CD4-positive, alpha-beta memory T cell (primary cell): ENCODE measurements at regions of chrX and their contacts with region 1.

Region 1: GRCh38 chrX:107776649-107777535 is 641 bp upstream of the NCBP2L start:
- DNase-seq: peak; percentile 83 to 85 (median 84)
- H3K4me3 ChIP-seq: peak overlapping the region; percentile 47 to 48
- H3K4me3 Mint-ChIP-seq: peak overlapping the region; percentile 86 to 98 (median 92)
- H3K27ac ChIP-seq: peak overlapping the region; percentile 52
- H3K27ac Mint-ChIP-seq: peak overlapping the region; percentile 81 to 96 (median 93)
- H3K4me1 ChIP-seq: peaks cover 21% of the 10 kb centered on the region
- H3K4me1 Mint-ChIP-seq: peaks cover 5 to 27% (median 14%) of the 10 kb centered on the region in 4 donors
- H3K27me3 ChIP-seq: no peaks in the 10 kb centered on the region
- H3K27me3 Mint-ChIP-seq: no peaks in the 10 kb centered on the region

Region 2: GRCh38 chrX:107205770-107206696 is 570.9 kb before region 1 on chrX and contains the starts of genes DNAAF6 and NUP62CL:
- CTCF ChIA-PET with region 1: no interaction called
- POLR2A ChIA-PET with region 1: no interaction called
- intact Hi-C with region 1: loop called (anchors 2 kb)
- DNase-seq: peak; percentile 64 to 75 (median 70)
- H3K4me3 ChIP-seq: peak within 1 kb of the TSS; percentile 42 to 63
- H3K4me3 Mint-ChIP-seq: peak within 1 kb of the TSS; percentile 85 to 94 (median 91)
- H3K27ac ChIP-seq: peak within 1 kb of the TSS; percentile 43
- H3K27ac Mint-ChIP-seq: peak within 1 kb of the TSS in 6 of 7 donors; percentile 79 to 93 (median 88)
- H3K4me1 ChIP-seq: no peaks in the 10 kb centered on the region
- H3K4me1 Mint-ChIP-seq: peaks cover 2 to 9% (median 7%) of the 10 kb centered on the region in 4 donors
- H3K27me3 ChIP-seq: no peaks in the 10 kb centered on the region
- H3K27me3 Mint-ChIP-seq: peaks cover 0 to 2% of the 10 kb centered on the region in 2 donors
- total RNA-seq, gene DNAAF6: not detected
- total RNA-seq, gene NUP62CL: 2.3 to 2.7 TPM

Region 3: GRCh38 chrX:107442901-107443527 is 333.9 kb before region 1 on chrX:
- CTCF ChIA-PET with region 1: no interaction called
- POLR2A ChIA-PET with region 1: no interaction called
- intact Hi-C with region 1: no loop called
- DNase-seq: no peak
- H3K4me3 ChIP-seq: no peak overlapping the region
- H3K4me3 Mint-ChIP-seq: no peak overlapping the region
- H3K27ac ChIP-seq: no peak overlapping the region
- H3K27ac Mint-ChIP-seq: no peak overlapping the region
- H3K4me1 ChIP-seq: no peaks in the 10 kb centered on the region
- H3K4me1 Mint-ChIP-seq: no peaks in the 10 kb centered on the region
- H3K27me3 ChIP-seq: no peaks in the 10 kb centered on the region
- H3K27me3 Mint-ChIP-seq: peaks cover 4 to 9% of the 10 kb centered on the region in 2 donors

Region 4: GRCh38 chrX:107610667-107611066 is 166.2 kb before region 1 on chrX:
- CTCF ChIA-PET with region 1: no interaction called
- POLR2A ChIA-PET with region 1: no interaction called
- intact Hi-C with region 1: no loop called
- DNase-seq: no peak
- H3K4me3 ChIP-seq: no peak overlapping the region
- H3K4me3 Mint-ChIP-seq: no peak overlapping the region
- H3K27ac ChIP-seq: no peak overlapping the region
- H3K27ac Mint-ChIP-seq: no peak overlapping the region
- H3K4me1 ChIP-seq: no peaks in the 10 kb centered on the region
- H3K4me1 Mint-ChIP-seq: no peaks in the 10 kb centered on the region
- H3K27me3 ChIP-seq: no peaks in the 10 kb centered on the region
- H3K27me3 Mint-ChIP-seq: no peaks in the 10 kb centered on the region

Region 5: GRCh38 chrX:107627838-107628661 is 148.8 kb before region 1 on chrX and contains the start of gene PRPS1:
- CTCF ChIA-PET with region 1: interaction called, 14 read pairs
- POLR2A ChIA-PET with region 1: interaction called, 10 read pairs
- intact Hi-C with region 1: no loop called
- DNase-seq: peak; percentile 84 to 93 (median 89)
- H3K4me3 ChIP-seq: peak within 1 kb of the TSS; percentile 79 to 86
- H3K4me3 Mint-ChIP-seq: peak within 1 kb of the TSS; percentile 85 to 99 (median 95)
- H3K27ac ChIP-seq: peak within 1 kb of the TSS; percentile 73
- H3K27ac Mint-ChIP-seq: peak within 1 kb of the TSS; percentile 94 to 96 (median 95)
- H3K4me1 ChIP-seq: peaks cover 31% of the 10 kb centered on the region
- H3K4me1 Mint-ChIP-seq: peaks cover 16 to 46% (median 29%) of the 10 kb centered on the region in 4 donors
- H3K27me3 ChIP-seq: no peaks in the 10 kb centered on the region
- H3K27me3 Mint-ChIP-seq: no peaks in the 10 kb centered on the region
- total RNA-seq, gene PRPS1: 56.1 to 61.3 TPM

Region 6: DNA sequence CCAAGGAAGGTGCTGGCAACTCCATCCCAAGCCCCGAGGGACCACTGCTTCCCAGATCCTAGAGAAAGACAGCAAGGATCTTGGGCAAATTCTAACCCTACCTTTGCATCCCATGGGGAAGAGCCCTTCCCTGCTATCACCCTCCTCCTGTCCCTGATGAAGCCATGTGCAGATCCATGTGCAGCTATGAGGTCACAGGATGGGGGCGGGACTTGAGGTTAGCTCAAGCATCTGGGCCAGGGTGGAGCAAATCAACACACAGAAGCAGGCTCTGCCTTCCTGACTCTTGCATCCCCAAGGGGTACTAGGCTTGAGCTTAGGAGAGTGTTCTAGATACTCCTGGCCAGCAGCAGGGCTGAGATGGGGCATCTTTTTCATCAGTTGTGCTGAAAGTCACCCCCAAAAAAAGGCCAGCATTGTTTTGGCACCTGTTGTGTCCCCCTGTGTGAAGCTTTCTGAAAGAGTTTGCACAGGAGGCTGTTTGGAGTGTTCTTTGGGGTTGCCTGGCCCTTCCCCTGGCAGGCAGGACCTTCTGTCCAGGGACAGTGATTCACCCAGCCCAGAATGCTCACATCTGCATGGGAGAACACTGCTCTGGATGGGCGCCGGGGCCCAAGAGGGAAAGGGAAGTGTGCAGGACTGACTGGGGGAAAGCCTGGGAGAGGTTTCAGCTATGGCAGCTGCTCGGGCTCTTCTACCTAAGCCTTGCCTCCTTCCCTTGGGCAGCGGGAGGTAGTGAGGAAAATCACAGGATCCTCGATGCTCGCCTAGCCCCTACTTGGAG is 97.7 kb before region 1 on chrX:
- CTCF ChIA-PET with region 1: interaction called, 79 read pairs
- POLR2A ChIA-PET with region 1: interaction called, 82 read pairs
- intact Hi-C with region 1: no loop called
- DNase-seq: peak; percentile 83 to 88 (median 86)
- H3K4me3 ChIP-seq: no peak overlapping the region
- H3K4me3 Mint-ChIP-seq: peak overlapping the region in 6 of 8 donors; percentile 53 to 87 (median 60)
- H3K27ac ChIP-seq: peak overlapping the region; percentile 97
- H3K27ac Mint-ChIP-seq: peak overlapping the region; percentile 96 to 100 (median 99)
- H3K4me1 ChIP-seq: peaks cover 62% of the 10 kb centered on the region
- H3K4me1 Mint-ChIP-seq: peaks cover 46 to 83% (median 73%) of the 10 kb centered on the region in 4 donors
- H3K27me3 ChIP-seq: no peaks in the 10 kb centered on the region
- H3K27me3 Mint-ChIP-seq: no peaks in the 10 kb centered on the region

Region 7: GRCh38 chrX:107716816-107717700 is 59.8 kb before region 1 on chrX:
- CTCF ChIA-PET with region 1: interaction called, 81 read pairs
- POLR2A ChIA-PET with region 1: interaction called, 91 read pairs
- intact Hi-C with region 1: loop called (anchors 1 kb)
- DNase-seq: peak; percentile 92 to 95 (median 95)
- H3K4me3 ChIP-seq: peak overlapping the region; percentile 61 to 92
- H3K4me3 Mint-ChIP-seq: peak overlapping the region; percentile 88 to 97 (median 96)
- H3K27ac ChIP-seq: peak overlapping the region; percentile 95
- H3K27ac Mint-ChIP-seq: peak overlapping the region; percentile 99 to 100 (median 100)
- H3K4me1 ChIP-seq: peaks cover 49% of the 10 kb centered on the region
- H3K4me1 Mint-ChIP-seq: peaks cover 25 to 61% (median 48%) of the 10 kb centered on the region in 4 donors
- H3K27me3 ChIP-seq: no peaks in the 10 kb centered on the region
- H3K27me3 Mint-ChIP-seq: no peaks in the 10 kb centered on the region

Region 8: DNA sequence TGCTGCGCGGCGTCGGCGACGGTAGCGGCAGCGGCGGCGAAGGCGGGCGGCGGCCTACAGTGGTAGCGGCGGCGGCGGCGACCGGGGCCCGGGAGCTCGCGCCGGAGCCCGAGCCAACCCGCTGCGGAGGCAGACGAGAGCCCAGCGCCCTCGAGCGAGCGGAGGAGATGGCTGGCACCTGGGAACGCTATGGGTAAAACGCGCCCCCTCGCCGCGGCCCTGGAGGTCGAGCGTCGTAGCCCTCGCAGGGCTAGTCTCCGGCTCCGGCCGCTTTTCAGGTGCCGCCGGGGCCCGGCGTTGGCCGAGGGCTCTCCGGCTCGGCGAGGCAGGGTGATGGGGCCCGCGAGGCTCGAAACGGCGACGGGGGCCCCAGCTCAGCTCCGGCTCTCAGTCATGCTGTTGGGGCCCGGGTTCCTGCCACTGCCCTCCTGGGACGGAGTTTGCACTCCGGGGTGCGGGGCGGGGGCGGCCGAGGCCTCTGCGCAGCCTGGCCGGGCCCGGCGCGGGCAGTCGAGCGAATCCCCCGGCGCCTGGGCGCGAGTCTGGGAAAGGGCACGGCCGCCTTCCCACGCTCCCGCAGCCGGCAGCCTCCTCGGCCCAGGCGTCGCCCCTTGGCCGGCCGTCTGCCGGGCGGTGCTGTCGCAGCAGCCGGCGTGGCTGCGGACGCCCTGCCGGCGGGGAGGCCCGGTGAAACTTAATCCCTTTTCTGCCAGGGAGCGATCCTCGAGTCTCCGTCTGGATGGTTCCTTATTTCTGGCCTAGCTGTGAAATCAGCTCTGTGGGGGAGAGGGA is 49.5 kb after region 1 on chrX:
- CTCF ChIA-PET with region 1: interaction called, 4 read pairs
- POLR2A ChIA-PET with region 1: no interaction called
- intact Hi-C with region 1: loop called (anchors 5 kb)
- DNase-seq: peak in 4 of 5 donors; percentile 20 to 48 (median 43)
- H3K4me3 ChIP-seq: peak overlapping the region in 1 of 2 donors; percentile 49
- H3K4me3 Mint-ChIP-seq: peak overlapping the region; percentile 75 to 95 (median 90)
- H3K27ac ChIP-seq: peak overlapping the region; percentile 52
- H3K27ac Mint-ChIP-seq: peak overlapping the region; percentile 68 to 93 (median 84)
- H3K4me1 ChIP-seq: peaks cover 19% of the 10 kb centered on the region
- H3K4me1 Mint-ChIP-seq: peaks cover 26 to 59% (median 35%) of the 10 kb centered on the region in 4 donors
- H3K27me3 ChIP-seq: no peaks in the 10 kb centered on the region
- H3K27me3 Mint-ChIP-seq: peaks cover 0 to 1% of the 10 kb centered on the region in 2 donors

Region 9: GRCh38 chrX:108070891-108071290 is 294.0 kb after region 1 on chrX:
- CTCF ChIA-PET with region 1: no interaction called
- POLR2A ChIA-PET with region 1: no interaction called
- intact Hi-C with region 1: loop called (anchors 5 kb)
- DNase-seq: no peak
- H3K4me3 ChIP-seq: no peak overlapping the region
- H3K4me3 Mint-ChIP-seq: no peak overlapping the region
- H3K27ac ChIP-seq: no peak overlapping the region
- H3K27ac Mint-ChIP-seq: peak overlapping the region in 4 of 7 donors; percentile 29 to 57 (median 32)
- H3K4me1 ChIP-seq: no peaks in the 10 kb centered on the region
- H3K4me1 Mint-ChIP-seq: peaks cover 0 to 4% (median 2%) of the 10 kb centered on the region in 4 donors
- H3K27me3 ChIP-seq: no peaks in the 10 kb centered on the region
- H3K27me3 Mint-ChIP-seq: no peaks in the 10 kb centered on the region